K562 (cell line): ENCODE measurements at regions of chr2 and their contacts with region 1.

Region 1: GRCh38 chr2:219543601-219544358 is at the starts of genes CHPF and TMEM198:
- DNase-seq: peak; percentile 92 to 98 (median 94)
- ATAC-seq: peak; percentile 89
- H3K4me3 ChIP-seq: peak within 1 kb of the TSS; percentile 83
- H3K27ac ChIP-seq: peak within 1 kb of the TSS; percentile 74
- H3K4me1 ChIP-seq: peaks cover 0 to 53% of the 10 kb centered on the region in 2 experiments; a peak in 3 of 5 replicates
- H3K27me3 ChIP-seq: no peaks in the 10 kb centered on the region
- CTCF ChIP-seq: no peak
- EP300 ChIP-seq: no peak; the same call in 1 of the 2 replicates
- POLR2A ChIP-seq: 0 out of 2 replicates have a peak, but pooled peaks have one; percentile 52
- RAD21 ChIP-seq: no peak
- polyA plus RNA-seq, gene CHPF: 0.15 to 0.35 TPM
- polyA plus RNA-seq, gene TMEM198: 0.03 TPM

Region 2: GRCh38 chr2:219571311-219572236 is 27.8 kb after region 1 on chr2 and contains the start of gene OBSL1:
- CTCF ChIA-PET with region 1: no interaction called
- POLR2A ChIA-PET with region 1: interaction called, 3 read pairs
- in situ Hi-C with region 1: no loop called
- intact Hi-C with region 1: loop called (anchors 2 kb)
- DNase-seq: peak; percentile 83 to 91 (median 85)
- ATAC-seq: peak; percentile 71
- H3K4me3 ChIP-seq: peak within 1 kb of the TSS; percentile 47
- H3K27ac ChIP-seq: peak within 1 kb of the TSS; percentile 90
- H3K4me1 ChIP-seq: peaks cover 26 to 61% of the 10 kb centered on the region in 2 experiments; a peak in 4 of 5 replicates
- H3K27me3 ChIP-seq: no peaks in the 10 kb centered on the region
- CTCF ChIP-seq: no peak
- EP300 ChIP-seq: peak; percentile 83
- POLR2A ChIP-seq: peak; percentile 68
- RAD21 ChIP-seq: no peak
- polyA plus RNA-seq, gene OBSL1: 1.2 to 1.9 TPM

Region 3: DNA sequence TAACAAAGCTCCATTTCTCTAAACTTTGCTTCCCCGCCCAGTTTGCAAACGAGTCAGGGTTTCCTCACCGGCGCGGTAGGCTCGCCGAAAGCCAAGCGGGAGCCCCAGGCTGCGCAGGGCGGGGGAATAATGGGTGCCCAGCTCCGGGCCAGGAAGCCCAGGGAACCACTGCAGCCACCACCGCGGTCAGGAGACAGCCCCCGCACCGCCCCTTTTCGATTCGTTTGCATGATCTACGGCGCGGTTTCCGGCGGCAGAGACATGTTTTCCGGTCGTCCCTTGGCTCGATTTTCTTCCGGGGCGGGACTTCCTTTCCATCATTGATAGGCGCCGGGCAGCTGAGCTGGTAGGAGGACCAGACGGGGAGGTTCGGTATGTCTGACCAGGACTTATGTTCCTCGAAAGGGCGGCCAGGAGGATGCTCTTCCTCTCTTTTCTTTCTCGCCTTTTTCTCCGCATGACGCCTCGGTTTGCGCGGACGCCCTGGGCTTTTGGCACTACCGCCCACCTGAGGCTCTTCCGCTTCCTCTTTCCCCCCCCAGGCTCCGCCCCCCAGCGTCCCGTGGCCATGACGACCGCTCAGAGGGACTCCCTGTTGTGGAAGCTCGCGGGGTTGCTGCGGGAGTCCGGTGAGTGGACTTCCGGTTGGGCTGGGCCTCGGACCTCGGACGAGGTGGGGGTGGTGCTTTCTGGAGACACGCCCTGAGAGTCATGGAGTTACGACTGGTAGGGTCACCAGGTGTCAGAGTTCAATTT is 54.0 kb after region 1 on chr2 and contains the start of gene STK11IP:
- CTCF ChIA-PET with region 1: interaction called, 3 read pairs
- POLR2A ChIA-PET with region 1: interaction called, 3 read pairs
- in situ Hi-C with region 1: no loop called
- intact Hi-C with region 1: loop called (anchors 1 kb)
- DNase-seq: peak; percentile 95 to 97 (median 96)
- ATAC-seq: peak; percentile 94
- H3K4me3 ChIP-seq: peak within 1 kb of the TSS; percentile 53
- H3K27ac ChIP-seq: peak within 1 kb of the TSS; percentile 90
- H3K4me1 ChIP-seq: peaks cover 9 to 20% of the 10 kb centered on the region in 2 experiments
- H3K27me3 ChIP-seq: no peaks in the 10 kb centered on the region
- CTCF ChIP-seq: 0 out of 6 replicates have a peak, but pooled peaks of 1 of the 3 experiments have one; percentile 3
- EP300 ChIP-seq: no peak; the same call in 1 of the 2 replicates
- POLR2A ChIP-seq: peak; percentile 90
- RAD21 ChIP-seq: no peak
- polyA plus RNA-seq, gene STK11IP: 0.52 to 0.89 TPM

Region 4: GRCh38 chr2:219627103-219628100 is 83.6 kb after region 1 on chr2 and contains the start of gene SLC4A3:
- CTCF ChIA-PET with region 1: interaction called, 3 read pairs
- POLR2A ChIA-PET with region 1: no interaction called
- in situ Hi-C with region 1: no loop called
- intact Hi-C with region 1: loop called (anchors 5 kb)
- DNase-seq: peak; percentile 17 to 80 (median 70)
- ATAC-seq: peak; percentile 80
- H3K4me3 ChIP-seq: peak within 1 kb of the TSS; percentile 35
- H3K27ac ChIP-seq: no peak within 1 kb of the TSS
- H3K4me1 ChIP-seq: peaks cover 0 to 49% of the 10 kb centered on the region in 2 experiments; a peak in 2 of 5 replicates
- H3K27me3 ChIP-seq: peaks cover 2 to 16% of the 10 kb centered on the region in 2 experiments; a peak in 1 of 5 replicates
- CTCF ChIP-seq: no peak
- EP300 ChIP-seq: no peak
- POLR2A ChIP-seq: no peak
- RAD21 ChIP-seq: no peak
- polyA plus RNA-seq, gene SLC4A3: not detected

Region 5: GRCh38 chr2:219642465-219643080 is 98.8 kb after region 1 on chr2:
- CTCF ChIA-PET with region 1: interaction called, 80 read pairs
- POLR2A ChIA-PET with region 1: no interaction called
- in situ Hi-C with region 1: loop called (anchors 5 kb)
- intact Hi-C with region 1: loop called (anchors 1 kb)
- DNase-seq: peak; percentile 87 to 95 (median 88)
- ATAC-seq: peak; percentile 95
- H3K4me3 ChIP-seq: no peak overlapping the region
- H3K27ac ChIP-seq: no peak overlapping the region; the same call in 2 of the 3 replicates
- H3K4me1 ChIP-seq: peaks cover 28 to 43% of the 10 kb centered on the region in 2 experiments; a peak in 4 of 5 replicates
- H3K27me3 ChIP-seq: peaks cover 0 to under 1% of the 10 kb centered on the region in 2 experiments; a peak in 1 of 5 replicates
- CTCF ChIP-seq: peak; percentile 99 to 100 (median 100)
- EP300 ChIP-seq: 0 out of 2 replicates have a peak, but pooled peaks have one; percentile 15
- POLR2A ChIP-seq: no peak
- RAD21 ChIP-seq: peak; percentile 98

Region 6: GRCh38 chr2:219689676-219690628 is 146.2 kb after region 1 on chr2:
- CTCF ChIA-PET with region 1: interaction called, 22 read pairs
- POLR2A ChIA-PET with region 1: interaction called, 4 read pairs
- in situ Hi-C with region 1: loop called (anchors 10 kb)
- intact Hi-C with region 1: loop called (anchors 1 kb)
- DNase-seq: peak; percentile 58 to 79 (median 58)
- ATAC-seq: peak; percentile 74
- H3K4me3 ChIP-seq: no peak overlapping the region
- H3K27ac ChIP-seq: no peak overlapping the region
- H3K4me1 ChIP-seq: peaks cover 2 to 3% of the 10 kb centered on the region in 2 experiments; a peak in 2 of 5 replicates
- H3K27me3 ChIP-seq: no peaks in the 10 kb centered on the region
- CTCF ChIP-seq: peak; percentile 59 to 77 (median 76); a peak in 5 of 6 replicates
- EP300 ChIP-seq: no peak
- POLR2A ChIP-seq: no peak
- RAD21 ChIP-seq: peak; percentile 59 to 70

Region 7: DNA sequence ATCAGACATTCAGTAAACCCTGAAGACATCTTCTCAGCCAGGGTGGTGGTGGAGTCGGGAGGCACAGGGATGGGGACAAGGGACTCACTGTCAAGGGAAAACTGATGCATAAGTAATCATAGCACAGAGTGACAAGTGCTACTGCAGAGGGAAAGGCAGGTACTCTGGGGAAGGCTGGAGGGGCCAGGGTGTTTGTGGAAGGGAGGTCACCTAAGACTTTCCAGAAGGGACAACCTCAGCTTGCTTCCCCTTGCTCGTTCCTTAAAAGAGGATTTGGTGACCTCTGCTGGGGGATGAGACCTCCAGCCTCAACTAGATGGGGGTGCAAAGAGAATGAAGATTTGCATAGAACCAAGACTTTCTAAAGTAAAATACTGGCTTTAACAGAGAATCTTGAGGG is 183.1 kb after region 1 on chr2:
- CTCF ChIA-PET with region 1: interaction called, 3 read pairs
- POLR2A ChIA-PET with region 1: no interaction called
- in situ Hi-C with region 1: no loop called
- intact Hi-C with region 1: loop called (anchors 2 kb)
- DNase-seq: peak in 2 of 4 experiments; percentile 24 to 37
- ATAC-seq: peak; percentile 63
- H3K4me3 ChIP-seq: no peak overlapping the region
- H3K27ac ChIP-seq: no peak overlapping the region
- H3K4me1 ChIP-seq: peaks cover 0 to 24% of the 10 kb centered on the region in 2 experiments; a peak in 3 of 5 replicates
- H3K27me3 ChIP-seq: no peaks in the 10 kb centered on the region; a peak in 1 of 5 replicates
- CTCF ChIP-seq: peak; percentile 33 to 47 (median 42); a peak in 5 of 6 replicates
- EP300 ChIP-seq: no peak
- POLR2A ChIP-seq: no peak
- RAD21 ChIP-seq: peak in 1 of 2 experiments; percentile 40; a peak in 2 of 4 replicates